Activated CD8-positive, alpha-beta T cell treated with anti-CD3 and anti-CD28 coated beads, Interleukin-2, amount 10 ng/mL, durations not matched to agents 7 days and 5 days (primary cell): ENCODE measurements at regions of chr6 and their contacts with region 1.

Region 1: GRCh38 chr6:35415065-35415991 is 36.8 kb upstream of the FANCE start:
- DNase-seq: peak; percentile 34
- ATAC-seq: no peak
- H3K4me3 Mint-ChIP-seq: no peak overlapping the region
- H3K27ac Mint-ChIP-seq: peak overlapping the region; percentile 78
- H3K4me1 Mint-ChIP-seq: peaks cover 84% of the 10 kb centered on the region
- H3K27me3 Mint-ChIP-seq: no peaks in the 10 kb centered on the region

Region 2: DNA sequence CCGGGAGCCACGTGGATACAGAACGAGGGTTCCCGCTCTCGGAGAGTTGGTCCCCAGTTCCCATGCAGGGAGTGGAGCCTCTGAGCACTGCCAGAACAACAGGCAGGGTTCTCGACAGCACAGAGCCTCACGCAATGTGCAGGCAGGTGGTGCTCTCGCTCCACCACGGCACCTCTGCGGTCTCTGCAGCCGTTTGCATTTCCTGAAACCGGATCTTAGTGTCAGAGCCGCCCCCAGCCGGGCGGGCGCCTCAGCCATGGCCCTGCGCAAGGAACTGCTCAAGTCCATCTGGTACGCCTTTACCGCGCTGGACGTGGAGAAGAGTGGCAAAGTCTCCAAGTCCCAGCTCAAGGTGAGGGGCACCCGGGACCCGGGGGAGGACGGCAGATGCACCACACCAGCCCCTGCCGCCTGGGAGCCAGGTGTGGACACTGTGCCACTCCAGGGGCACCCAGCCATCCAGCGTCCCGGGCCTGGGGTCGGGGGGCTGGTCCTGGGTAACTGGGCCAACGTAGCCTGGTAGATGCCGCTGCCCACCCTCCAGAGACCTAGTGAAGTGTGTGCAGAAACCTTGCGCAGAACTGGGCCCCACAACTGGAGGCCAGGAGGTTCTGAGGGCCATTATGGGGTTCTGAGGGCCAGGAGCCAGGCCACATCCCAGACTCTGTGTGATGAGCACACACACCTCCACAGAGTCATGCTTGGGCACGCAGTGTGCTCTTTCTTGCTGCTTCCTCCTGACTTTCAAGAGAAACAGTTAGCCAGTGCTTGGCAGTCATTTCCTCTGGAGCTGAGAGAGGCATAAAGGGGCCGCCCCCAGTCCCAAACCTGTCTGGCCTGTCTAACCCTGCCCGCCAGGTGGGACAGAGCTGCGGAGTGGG is 117.5 kb before region 1 on chr6 and contains the start of gene DEF6:
- CTCF ChIA-PET with region 1: interaction called, 39 read pairs
- POLR2A ChIA-PET with region 1: interaction called, 3 read pairs
- DNase-seq: peak; percentile 94
- ATAC-seq: peak; percentile 83
- H3K4me3 Mint-ChIP-seq: peak within 1 kb of the TSS; percentile 90
- H3K27ac Mint-ChIP-seq: peak within 1 kb of the TSS; percentile 98
- H3K4me1 Mint-ChIP-seq: peaks cover 50% of the 10 kb centered on the region
- H3K27me3 Mint-ChIP-seq: no peaks in the 10 kb centered on the region
- total RNA-seq, gene DEF6: 191 to 195 TPM

Region 3: GRCh38 chr6:35368038-35368887 is 47.1 kb before region 1 on chr6:
- CTCF ChIA-PET with region 1: interaction called, 11 read pairs
- POLR2A ChIA-PET with region 1: no interaction called
- DNase-seq: peak; percentile 34
- ATAC-seq: peak; percentile 56
- H3K4me3 Mint-ChIP-seq: no peak overlapping the region
- H3K27ac Mint-ChIP-seq: peak overlapping the region; percentile 61
- H3K4me1 Mint-ChIP-seq: peaks cover 63% of the 10 kb centered on the region
- H3K27me3 Mint-ChIP-seq: no peaks in the 10 kb centered on the region

Region 4: DNA sequence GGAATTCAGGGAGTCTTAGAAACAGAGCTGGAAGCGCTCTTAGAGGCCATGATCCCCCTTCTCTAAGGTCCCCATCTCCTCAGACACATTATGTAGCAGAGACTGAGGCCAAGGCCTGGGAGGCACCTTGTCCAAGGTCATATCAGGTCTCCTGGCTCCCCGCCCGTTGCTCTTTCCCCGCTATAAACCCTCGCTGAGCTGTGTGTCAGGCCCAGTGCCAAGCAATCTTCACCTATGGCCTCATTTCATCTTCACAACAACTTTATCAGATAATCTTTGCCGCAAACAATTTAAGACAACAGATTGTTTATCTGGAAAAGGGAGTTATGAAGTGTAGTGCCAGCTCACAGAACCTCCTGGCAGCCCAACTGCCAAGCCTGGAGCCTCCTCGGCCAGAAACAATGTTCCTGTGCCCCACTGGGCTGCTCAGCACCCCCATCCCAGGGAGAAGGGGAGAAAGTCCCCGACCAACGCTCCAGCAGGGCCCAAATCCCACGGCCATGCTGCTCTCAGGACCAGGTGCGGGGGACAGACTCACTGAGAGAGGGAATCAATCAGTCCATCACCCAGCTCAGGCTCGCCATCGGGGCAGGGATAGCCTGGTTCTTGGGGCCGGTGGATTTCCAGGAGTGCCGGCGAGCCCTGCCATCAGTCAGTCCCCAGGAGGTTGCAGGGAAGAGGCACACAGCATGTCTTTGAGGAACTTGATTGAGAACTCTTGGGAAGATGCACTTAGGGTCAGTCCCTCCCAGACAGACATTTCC is 19.9 kb after region 1 on chr6:
- CTCF ChIA-PET with region 1: interaction called, 10 read pairs
- POLR2A ChIA-PET with region 1: interaction called, 3 read pairs
- DNase-seq: no peak
- ATAC-seq: no peak
- H3K4me3 Mint-ChIP-seq: no peak overlapping the region
- H3K27ac Mint-ChIP-seq: peak overlapping the region; percentile 25
- H3K4me1 Mint-ChIP-seq: no peaks in the 10 kb centered on the region
- H3K27me3 Mint-ChIP-seq: no peaks in the 10 kb centered on the region

Region 5: DNA sequence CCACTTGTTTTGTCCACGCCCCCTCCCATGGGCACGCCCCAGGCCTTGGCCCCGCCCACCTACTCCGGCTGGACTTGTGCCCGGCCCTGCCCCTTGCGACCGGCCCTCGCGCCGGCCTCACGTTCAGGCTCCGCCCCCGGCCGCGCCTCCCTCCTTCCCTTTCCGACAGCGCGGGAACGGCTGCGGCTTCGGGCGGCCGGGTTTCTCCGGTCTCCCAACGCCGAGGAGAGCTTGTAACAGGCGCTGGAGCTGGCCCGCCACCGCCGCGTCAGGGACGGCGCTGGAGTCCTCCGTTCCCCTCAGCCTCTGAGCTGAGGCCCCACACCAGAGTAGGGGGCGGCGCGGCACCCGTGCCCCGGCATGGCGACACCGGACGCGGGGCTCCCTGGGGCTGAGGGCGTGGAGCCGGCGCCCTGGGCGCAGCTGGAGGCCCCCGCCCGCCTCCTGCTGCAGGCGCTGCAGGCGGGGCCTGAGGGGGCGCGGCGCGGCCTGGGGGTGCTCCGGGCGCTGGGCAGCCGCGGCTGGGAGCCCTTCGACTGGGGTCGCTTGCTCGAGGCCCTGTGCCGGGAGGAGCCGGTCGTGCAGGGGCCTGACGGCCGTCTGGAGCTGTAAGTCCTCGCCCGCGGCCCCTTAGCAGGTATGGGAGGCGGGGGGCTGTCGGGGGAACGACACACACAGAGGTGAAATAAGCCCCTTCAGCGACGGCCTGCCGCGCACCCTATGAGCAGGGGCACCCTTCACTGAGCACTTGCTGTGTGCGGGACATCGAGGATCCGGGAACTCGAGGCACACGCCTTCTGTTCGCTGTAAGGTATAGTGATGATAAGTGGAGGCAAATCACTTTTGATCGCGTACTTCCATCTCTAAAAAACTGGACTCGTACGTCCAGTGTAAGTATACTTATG is 37.1 kb after region 1 on chr6 and contains the start of gene FANCE:
- CTCF ChIA-PET with region 1: interaction called, 95 read pairs
- POLR2A ChIA-PET with region 1: interaction called, 5 read pairs
- DNase-seq: peak; percentile 93
- ATAC-seq: peak; percentile 84
- H3K4me3 Mint-ChIP-seq: peak within 1 kb of the TSS; percentile 83
- H3K27ac Mint-ChIP-seq: peak within 1 kb of the TSS; percentile 75
- H3K4me1 Mint-ChIP-seq: peaks cover 50% of the 10 kb centered on the region
- H3K27me3 Mint-ChIP-seq: peaks cover 4% of the 10 kb centered on the region
- total RNA-seq, gene FANCE: 20.4 to 21.9 TPM